ENCODE measurements at regions of chr18 and their contacts with region 1.

Region 1: DNA sequence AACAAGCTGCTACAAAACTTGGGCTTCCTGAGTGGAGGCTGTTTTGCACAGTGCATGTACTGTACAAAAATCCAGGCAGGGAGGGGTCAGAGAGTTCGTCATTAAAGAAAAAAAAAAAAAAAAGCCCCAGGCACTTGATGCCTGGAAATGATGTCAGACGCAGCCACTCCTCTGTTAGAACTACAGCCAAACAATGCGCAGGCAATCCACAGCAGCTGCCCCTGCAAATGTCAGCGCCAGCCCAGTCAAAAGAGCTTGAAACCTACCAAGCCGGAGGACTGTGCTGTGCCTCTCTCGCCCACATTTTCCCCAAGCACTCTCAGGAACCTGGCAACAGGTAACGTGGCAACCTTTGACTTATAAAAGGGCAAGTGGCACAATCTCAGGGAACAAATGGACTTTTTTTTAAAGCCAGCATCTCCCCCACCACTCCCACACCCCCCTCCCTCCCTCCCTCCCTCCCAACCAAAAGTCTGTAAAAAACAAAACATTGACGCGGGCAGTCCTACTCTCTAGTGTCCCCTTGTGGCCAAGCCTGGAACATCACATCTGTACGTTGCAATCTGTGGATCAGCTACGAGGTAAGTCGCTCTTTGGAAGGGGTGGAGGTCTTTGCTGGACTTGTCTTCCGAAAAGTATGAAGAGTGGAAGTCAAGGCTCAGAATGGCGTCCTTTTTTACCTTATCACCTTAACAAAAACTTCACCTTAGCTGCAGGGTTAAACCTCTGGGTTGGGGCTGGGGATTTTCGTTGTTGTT is 144.1 kb downstream of the TGIF1 start:
- DNase-seq: peak; percentile 94
- H3K4me3 ChIP-seq: peak overlapping the region; percentile 34
- H3K27ac ChIP-seq: peak overlapping the region; percentile 96
- H3K4me1 ChIP-seq: peaks cover 16% of the 10 kb centered on the region
- H3K27me3 ChIP-seq: no peaks in the 10 kb centered on the region
- CTCF ChIP-seq: peak; percentile 84

Region 2: DNA sequence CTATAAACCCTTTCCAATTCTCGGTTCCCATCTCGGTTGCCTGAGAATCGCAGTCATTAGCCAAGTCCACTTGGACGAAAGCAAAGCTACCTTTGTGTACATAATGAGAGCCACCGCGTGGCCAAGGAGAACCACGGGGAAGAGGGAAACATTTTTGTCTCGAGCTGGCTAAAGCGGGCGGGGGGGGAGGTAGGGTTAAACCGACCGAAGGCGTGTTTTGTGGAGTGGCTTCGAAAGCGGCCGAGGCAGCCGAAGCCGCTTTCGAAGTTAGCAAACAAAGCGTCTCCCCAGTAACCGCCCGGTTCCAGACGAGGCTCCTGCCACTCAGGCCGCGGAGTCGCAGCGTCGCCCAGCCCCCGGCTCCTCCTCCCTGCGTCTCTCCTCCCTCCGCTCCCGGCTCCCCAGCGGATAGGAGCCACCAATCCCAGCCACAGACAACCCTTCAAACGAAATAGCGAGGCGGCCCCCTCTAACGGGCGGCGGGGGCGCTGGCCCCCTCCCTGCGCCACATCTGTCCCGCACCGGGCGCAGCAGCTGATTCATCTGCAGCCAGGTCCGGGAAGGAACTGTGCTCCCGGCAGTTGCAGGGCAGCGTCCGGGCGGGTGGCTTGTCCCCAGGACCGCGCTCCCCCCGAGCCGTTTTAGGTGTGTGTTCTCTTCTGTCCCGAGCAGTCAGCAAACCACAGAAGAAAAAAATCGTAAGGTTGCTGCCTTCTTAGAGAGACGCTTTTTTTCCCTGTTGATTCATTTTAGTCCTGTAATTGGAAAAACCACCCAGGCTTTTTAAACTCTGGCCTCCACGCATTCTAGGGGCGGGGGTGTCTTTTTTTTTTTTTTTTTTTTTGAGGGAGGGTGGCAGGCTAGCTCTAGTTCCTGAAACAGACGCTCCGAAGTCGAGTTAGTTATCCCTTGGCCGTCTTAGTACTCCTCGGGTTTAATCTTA is 145.9 kb before region 1 on chr18:
- intact Hi-C with region 1: loop called (anchors 5 kb)
- DNase-seq: peak; percentile 96
- H3K4me3 ChIP-seq: peak overlapping the region; percentile 68
- H3K27ac ChIP-seq: peak overlapping the region; percentile 100
- H3K4me1 ChIP-seq: peaks cover 8% of the 10 kb centered on the region
- H3K27me3 ChIP-seq: no peaks in the 10 kb centered on the region
- CTCF ChIP-seq: no peak

Region 3: DNA sequence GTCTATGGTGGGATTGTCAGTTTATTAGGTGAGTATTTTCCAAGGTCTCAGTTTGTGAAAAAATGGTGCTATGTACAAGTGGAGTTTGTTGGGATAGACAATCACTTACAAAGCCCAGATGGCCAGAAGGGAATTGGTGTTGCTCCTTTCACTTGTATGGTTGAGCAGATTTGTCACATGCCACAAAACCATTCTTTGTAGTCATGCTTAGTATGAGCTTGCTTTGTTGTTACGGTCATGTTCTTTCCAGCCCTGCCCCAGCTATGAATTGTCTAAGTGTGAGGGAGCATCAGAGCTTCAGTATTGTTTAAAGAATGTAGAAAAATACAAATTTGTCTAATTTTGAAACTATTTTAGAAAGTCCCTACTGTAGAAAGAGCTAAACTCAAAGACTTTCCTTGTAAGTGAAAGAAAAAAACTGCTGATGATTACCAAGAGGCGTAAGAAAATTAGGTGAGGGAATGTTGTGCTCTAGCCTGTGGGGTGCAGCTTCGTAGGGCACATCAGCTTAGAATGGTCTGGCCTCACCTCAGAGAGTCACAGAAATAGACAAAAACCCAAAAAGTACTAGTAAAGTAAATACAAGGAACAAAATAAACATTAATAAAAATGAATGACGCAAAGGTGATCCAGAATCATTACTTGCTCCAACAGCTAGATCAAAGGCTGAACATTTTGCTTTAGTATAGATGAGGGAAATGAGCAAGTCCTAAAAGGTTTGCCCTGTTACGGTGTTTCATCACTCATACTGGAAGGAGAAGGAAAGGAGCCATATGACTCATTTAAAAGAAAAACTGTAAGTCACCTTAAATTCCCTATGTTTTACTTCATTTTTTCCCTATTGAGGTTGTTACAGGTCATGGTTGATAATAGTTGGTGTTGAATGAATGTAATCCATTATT is 134.9 kb before region 1 on chr18:
- intact Hi-C with region 1: no loop called
- DNase-seq: no peak
- H3K4me3 ChIP-seq: no peak overlapping the region
- H3K27ac ChIP-seq: peak overlapping the region; percentile 100
- H3K4me1 ChIP-seq: peaks cover 13% of the 10 kb centered on the region
- H3K27me3 ChIP-seq: no peaks in the 10 kb centered on the region
- CTCF ChIP-seq: no peak

Measured in colonic mucosa (tissue), 4 donors.